ENCODE measurements at regions of chr2 and their contacts with region 1.

Region 1: DNA sequence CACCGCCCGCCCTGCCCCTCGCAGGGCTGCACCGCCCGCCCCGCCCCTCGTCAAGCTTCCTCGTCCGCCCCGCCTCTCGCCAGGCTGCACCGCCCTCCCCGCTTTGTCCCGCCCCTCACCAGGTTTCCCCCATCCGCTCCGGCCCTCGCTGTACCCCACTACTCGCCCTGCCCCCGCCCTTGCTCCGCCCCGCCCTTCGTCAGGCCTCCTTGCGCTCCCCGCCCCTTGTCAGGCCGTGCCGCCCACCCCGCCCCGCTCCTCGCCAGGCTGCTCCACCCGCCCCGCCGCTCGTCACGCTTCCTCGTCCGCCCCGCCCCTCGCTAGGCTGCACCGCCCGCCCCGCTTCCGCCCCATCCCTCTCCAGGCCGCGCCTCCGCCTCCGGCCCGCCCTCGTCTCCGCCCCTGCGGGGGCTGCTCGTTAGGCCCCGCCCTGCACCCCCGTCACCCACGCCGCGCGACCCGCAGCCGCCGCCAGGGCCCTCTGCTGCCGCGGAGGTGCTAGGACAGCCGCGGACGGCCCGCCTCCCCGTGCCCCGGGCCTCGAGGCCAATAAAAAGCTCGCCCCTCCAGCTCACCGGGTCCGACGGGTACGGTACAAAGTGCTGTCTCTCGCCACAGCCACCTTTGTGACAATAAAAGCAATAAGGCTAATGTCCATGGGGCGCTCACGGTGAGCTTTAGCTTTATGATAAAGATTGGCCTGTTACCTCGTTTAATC is 574 bp upstream of the DNPEP start:
- DNase-seq: peak; percentile 98 to 100 (median 99)
- ATAC-seq: peak; percentile 79
- H3K4me3 ChIP-seq: peak overlapping the region; percentile 39 to 42
- H3K4me3 Mint-ChIP-seq: peak overlapping the region; percentile 92
- H3K27ac ChIP-seq: peak overlapping the region; percentile 40 to 86
- H3K27ac Mint-ChIP-seq: peak overlapping the region; percentile 84
- H3K4me1 ChIP-seq: peaks cover 22% of the 10 kb centered on the region
- H3K4me1 Mint-ChIP-seq: peaks cover 23% of the 10 kb centered on the region
- H3K27me3 ChIP-seq: no peaks in the 10 kb centered on the region
- H3K27me3 Mint-ChIP-seq: no peaks in the 10 kb centered on the region
- CTCF ChIP-seq: peak; percentile 62

Region 2: DNA sequence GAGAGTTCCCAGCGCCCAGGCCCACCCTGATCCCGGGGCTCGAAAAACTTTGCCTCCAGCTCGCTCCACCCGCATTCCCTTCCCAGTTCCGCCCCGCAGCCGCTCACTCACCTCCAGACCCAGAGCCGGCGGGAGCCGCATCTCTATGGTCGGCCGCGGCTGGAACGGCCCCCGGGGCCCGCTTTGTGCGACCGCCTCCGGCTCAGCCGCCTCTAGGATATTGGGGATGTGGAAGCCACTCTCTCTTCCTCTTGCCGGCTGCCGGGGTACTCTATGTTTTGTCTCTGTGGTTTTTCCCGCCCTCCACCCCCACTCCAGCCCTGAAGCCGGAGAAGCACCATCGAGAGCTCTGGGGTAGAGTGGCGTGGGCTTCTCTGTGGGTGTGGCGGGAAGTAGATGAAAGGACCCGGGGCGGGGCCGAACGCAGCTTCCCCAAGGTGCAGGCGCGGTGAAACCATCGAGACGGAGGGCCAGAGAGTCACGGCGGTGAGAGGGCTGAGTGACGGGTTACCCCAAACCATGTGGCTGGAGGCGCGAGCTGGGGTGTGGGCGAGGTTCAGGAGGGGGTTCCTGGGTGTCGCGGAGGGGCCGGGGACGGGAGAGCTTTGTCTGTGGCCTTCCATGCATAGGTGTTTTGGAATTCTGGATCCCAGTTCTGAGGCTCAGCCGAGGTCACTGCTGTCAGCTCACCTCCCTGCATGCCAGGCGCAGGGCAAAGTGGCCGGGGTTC is 728.9 kb before region 1 on chr2 and contains the starts of genes BCS1L and ZNF142:
- CTCF ChIA-PET with region 1: no interaction called
- POLR2A ChIA-PET with region 1: no interaction called
- intact Hi-C with region 1: loop called (anchors 2 kb)
- DNase-seq: peak; percentile 78 to 97 (median 92)
- ATAC-seq: peak; percentile 98
- H3K4me3 ChIP-seq: peak within 1 kb of the TSS; percentile 95 to 98
- H3K4me3 Mint-ChIP-seq: peak within 1 kb of the TSS; percentile 97
- H3K27ac ChIP-seq: peak within 1 kb of the TSS; percentile 66 to 80
- H3K27ac Mint-ChIP-seq: peak within 1 kb of the TSS; percentile 95
- H3K4me1 ChIP-seq: peaks cover 17% of the 10 kb centered on the region
- H3K4me1 Mint-ChIP-seq: peaks cover 34% of the 10 kb centered on the region
- H3K27me3 ChIP-seq: no peaks in the 10 kb centered on the region
- H3K27me3 Mint-ChIP-seq: no peaks in the 10 kb centered on the region
- CTCF ChIP-seq: no peak
- total RNA-seq, gene BCS1L: 13.1 to 17.4 TPM
- total RNA-seq, gene ZNF142: 41.6 to 42.6 TPM

Region 3: GRCh38 chr2:219160186-219161017 is 227.9 kb before region 1 on chr2 and contains the start of gene NHEJ1:
- CTCF ChIA-PET with region 1: no interaction called
- POLR2A ChIA-PET with region 1: no interaction called
- intact Hi-C with region 1: loop called (anchors 1 to 5 kb)
- DNase-seq: peak; percentile 83 to 97 (median 92)
- ATAC-seq: peak; percentile 88
- H3K4me3 ChIP-seq: peak within 1 kb of the TSS; percentile 59 to 77
- H3K4me3 Mint-ChIP-seq: peak within 1 kb of the TSS; percentile 93
- H3K27ac ChIP-seq: peak within 1 kb of the TSS; percentile 60 to 69
- H3K27ac Mint-ChIP-seq: peak within 1 kb of the TSS; percentile 95
- H3K4me1 ChIP-seq: peaks cover 11% of the 10 kb centered on the region
- H3K4me1 Mint-ChIP-seq: peaks cover 16% of the 10 kb centered on the region
- H3K27me3 ChIP-seq: no peaks in the 10 kb centered on the region
- H3K27me3 Mint-ChIP-seq: no peaks in the 10 kb centered on the region
- CTCF ChIP-seq: peak; percentile 97
- total RNA-seq, gene NHEJ1: 7.2 to 8.1 TPM

Region 4: GRCh38 chr2:219229305-219230058 is 158.8 kb before region 1 on chr2 and contains the starts of genes ANKZF1 and ATG9A:
- CTCF ChIA-PET with region 1: no interaction called
- POLR2A ChIA-PET with region 1: no interaction called
- intact Hi-C with region 1: loop called (anchors 1 kb)
- DNase-seq: peak; percentile 95 to 99 (median 98)
- ATAC-seq: peak; percentile 96
- H3K4me3 ChIP-seq: peak within 1 kb of the TSS; percentile 83 to 93
- H3K4me3 Mint-ChIP-seq: peak within 1 kb of the TSS; percentile 99
- H3K27ac ChIP-seq: peak within 1 kb of the TSS; percentile 79 to 95
- H3K27ac Mint-ChIP-seq: peak within 1 kb of the TSS; percentile 98
- H3K4me1 ChIP-seq: peaks cover 39% of the 10 kb centered on the region
- H3K4me1 Mint-ChIP-seq: peaks cover 58% of the 10 kb centered on the region
- H3K27me3 ChIP-seq: no peaks in the 10 kb centered on the region
- H3K27me3 Mint-ChIP-seq: no peaks in the 10 kb centered on the region
- CTCF ChIP-seq: no peak
- total RNA-seq, gene ANKZF1: 97.4 to 99.5 TPM
- total RNA-seq, gene ATG9A: 103 to 116 TPM

Region 5: GRCh38 chr2:219294356-219295351 is 93.6 kb before region 1 on chr2:
- CTCF ChIA-PET with region 1: interaction called, 5 read pairs
- POLR2A ChIA-PET with region 1: no interaction called
- intact Hi-C with region 1: loop called (anchors 1 to 5 kb)
- DNase-seq: peak; percentile 79 to 94 (median 87)
- ATAC-seq: peak; percentile 94
- H3K4me3 ChIP-seq: peak overlapping the region; percentile 49
- H3K4me3 Mint-ChIP-seq: peak overlapping the region; percentile 72
- H3K27ac ChIP-seq: peak overlapping the region; percentile 14 to 59
- H3K27ac Mint-ChIP-seq: peak overlapping the region; percentile 86
- H3K4me1 ChIP-seq: peaks cover 39% of the 10 kb centered on the region
- H3K4me1 Mint-ChIP-seq: peaks cover 37% of the 10 kb centered on the region
- H3K27me3 ChIP-seq: peaks cover 0 to 2% of the 10 kb centered on the region in 2 experiments
- H3K27me3 Mint-ChIP-seq: peaks cover 2% of the 10 kb centered on the region
- CTCF ChIP-seq: peak; percentile 98

Region 6: GRCh38 chr2:219331560-219332213 is 56.6 kb before region 1 on chr2:
- CTCF ChIA-PET with region 1: no interaction called
- POLR2A ChIA-PET with region 1: no interaction called
- intact Hi-C with region 1: no loop called
- DNase-seq: peak in 4 of 9 experiments; percentile 12 to 34 (median 28)
- ATAC-seq: no peak
- H3K4me3 ChIP-seq: no peak overlapping the region
- H3K4me3 Mint-ChIP-seq: no peak overlapping the region
- H3K27ac ChIP-seq: no peak overlapping the region
- H3K27ac Mint-ChIP-seq: no peak overlapping the region
- H3K4me1 ChIP-seq: no peaks in the 10 kb centered on the region
- H3K4me1 Mint-ChIP-seq: no peaks in the 10 kb centered on the region
- H3K27me3 ChIP-seq: peaks cover 18 to 20% of the 10 kb centered on the region in 2 experiments
- H3K27me3 Mint-ChIP-seq: peaks cover 62% of the 10 kb centered on the region
- CTCF ChIP-seq: no peak

Region 7: GRCh38 chr2:219530048-219530963 is 142.0 kb after region 1 on chr2:
- CTCF ChIA-PET with region 1: interaction called, 10 read pairs
- POLR2A ChIA-PET with region 1: no interaction called
- intact Hi-C with region 1: no loop called
- DNase-seq: peak; percentile 73 to 92 (median 85)
- ATAC-seq: peak; percentile 98
- H3K4me3 ChIP-seq: no peak overlapping the region
- H3K4me3 Mint-ChIP-seq: no peak overlapping the region
- H3K27ac ChIP-seq: no peak overlapping the region
- H3K27ac Mint-ChIP-seq: no peak overlapping the region
- H3K4me1 ChIP-seq: no peaks in the 10 kb centered on the region
- H3K4me1 Mint-ChIP-seq: peaks cover 3% of the 10 kb centered on the region
- H3K27me3 ChIP-seq: peaks cover 6 to 9% of the 10 kb centered on the region in 2 experiments
- H3K27me3 Mint-ChIP-seq: peaks cover 67% of the 10 kb centered on the region
- CTCF ChIP-seq: peak; percentile 98

Measured in CD8-positive, alpha-beta T cell (primary cell).